ENCODE measurements at regions of chr11 and their contacts with region 1.

Region 1: DNA sequence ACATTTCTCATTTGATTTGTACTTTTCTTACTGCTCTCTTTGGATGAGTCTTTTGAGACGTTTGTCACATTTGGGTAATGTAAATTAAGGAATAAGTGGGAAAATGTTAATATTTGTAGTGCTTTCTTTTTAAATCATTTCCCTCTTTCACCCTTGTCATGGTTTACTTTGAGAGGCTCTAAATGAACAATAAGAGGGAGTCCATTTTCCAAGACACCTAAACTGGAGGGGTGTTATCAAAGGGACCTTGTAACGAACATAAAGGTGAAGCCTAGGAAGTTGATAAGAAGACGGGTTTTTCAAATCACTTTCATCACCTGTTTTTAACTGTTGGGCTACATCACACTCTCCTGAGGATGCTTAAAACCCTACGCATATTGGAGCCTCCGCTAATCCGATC is 12.1 kb downstream of the EED start:
- DNase-seq: no peak
- H3K4me3 ChIP-seq: no peak overlapping the region
- H3K27ac ChIP-seq: no peak overlapping the region
- H3K4me1 ChIP-seq: no peaks in the 10 kb centered on the region
- H3K27me3 ChIP-seq: no peaks in the 10 kb centered on the region
- CTCF ChIP-seq: no peak

Region 2: DNA sequence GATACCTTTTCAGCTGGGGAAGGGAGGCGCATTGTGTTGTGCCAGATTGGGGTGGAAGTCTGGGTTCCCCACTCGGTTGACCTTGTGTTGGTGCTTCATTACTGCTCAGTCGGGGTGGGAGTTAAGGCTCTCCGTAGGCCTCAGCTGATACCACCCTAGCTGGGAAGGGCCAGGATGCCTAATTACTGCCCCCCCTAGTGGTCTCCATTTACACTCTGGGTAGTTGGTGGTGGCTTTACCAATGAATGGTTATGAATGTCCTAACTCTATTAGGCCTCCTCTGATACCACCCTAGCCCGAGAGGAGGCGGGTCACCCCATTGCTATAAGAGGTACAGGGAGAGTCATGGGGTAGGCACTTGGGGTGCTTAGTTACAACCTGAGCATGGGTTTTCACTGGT is 17.9 kb after region 1 on chr11:
- CTCF ChIA-PET with region 1: interaction called, 11 read pairs
- POLR2A ChIA-PET with region 1: no interaction called
- intact Hi-C with region 1: no loop called
- DNase-seq: no peak
- H3K4me3 ChIP-seq: no peak overlapping the region
- H3K27ac ChIP-seq: no peak overlapping the region
- H3K4me1 ChIP-seq: no peaks in the 10 kb centered on the region
- H3K27me3 ChIP-seq: no peaks in the 10 kb centered on the region
- CTCF ChIP-seq: peak; percentile 48; the same call in 1 of the 2 replicates

Measured in PC-9 (cell line).